Adrenal gland (tissue), 19 donors: ENCODE measurements at regions of chr1 and their contacts with region 1.

Region 1: GRCh38 chr1:23539698-23540266 is 8.7 kb upstream of the E2F2 start:
- DNase-seq: peak; percentile 87 to 97 (median 92)
- H3K4me3 ChIP-seq: peak overlapping the region in 1 of 4 donors; percentile 26
- H3K27ac ChIP-seq: no peak overlapping the region
- H3K4me1 ChIP-seq: peaks cover 6 to 17% of the 10 kb centered on the region in 2 donors
- H3K27me3 ChIP-seq: no peaks in the 10 kb centered on the region
- CTCF ChIP-seq: peak; percentile 84 to 93 (median 90)
- POLR2A ChIP-seq: no peak

Region 2: DNA sequence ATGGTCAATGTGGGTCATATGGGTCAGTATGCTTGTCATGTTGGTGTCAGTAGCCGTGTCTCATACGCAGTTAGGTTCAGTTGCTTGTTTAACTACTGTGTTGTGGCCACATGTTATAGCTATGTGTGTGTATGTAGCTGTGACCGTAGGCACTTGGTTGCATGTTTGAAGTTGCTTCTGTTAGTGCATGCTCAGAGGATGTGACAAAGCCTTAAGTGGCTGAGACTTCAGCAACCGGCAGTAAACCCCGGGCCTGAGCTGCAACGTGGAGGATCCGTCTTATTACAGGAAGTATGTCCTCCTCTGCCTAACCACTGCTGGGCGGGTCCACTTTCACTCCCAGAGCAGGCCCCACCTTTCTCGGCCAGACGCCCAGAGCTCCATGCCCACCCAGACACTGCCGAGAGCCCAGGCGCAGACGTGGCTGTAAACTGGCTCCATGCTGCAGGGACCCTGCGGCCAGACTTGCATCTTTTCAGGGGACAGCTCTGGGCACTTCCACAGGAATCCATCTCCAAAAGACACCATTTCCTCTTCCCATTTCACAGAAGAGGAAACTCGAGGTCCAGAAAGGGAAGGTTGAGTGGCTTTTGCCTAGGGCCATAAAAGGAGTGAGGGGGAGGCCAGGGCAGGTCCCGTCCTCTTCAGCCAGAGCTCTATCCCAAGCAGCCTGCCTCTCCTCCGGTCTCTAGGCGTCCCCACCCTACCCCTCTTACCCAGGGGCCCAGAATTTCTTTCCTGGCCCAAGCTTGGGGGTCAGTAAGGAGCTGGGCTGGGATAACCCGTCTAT is 117.3 kb before region 1 on chr1:
- intact Hi-C with region 1: loop called in 1 of 2 experiments (anchors 10 kb)
- DNase-seq: peak; percentile 60 to 86 (median 77)
- H3K4me3 ChIP-seq: peak overlapping the region in 1 of 4 donors; percentile 82
- H3K27ac ChIP-seq: peak overlapping the region in 4 of 5 donors; percentile 11 to 89 (median 86)
- H3K4me1 ChIP-seq: peaks cover 34 to 48% of the 10 kb centered on the region in 2 donors
- H3K27me3 ChIP-seq: no peaks in the 10 kb centered on the region
- CTCF ChIP-seq: no peak
- POLR2A ChIP-seq: peak in 1 of 2 donors; percentile 24

Region 3: GRCh38 chr1:23496490-23497181 is 43.1 kb before region 1 on chr1:
- intact Hi-C with region 1: loop called (anchors 2 to 5 kb)
- DNase-seq: no peak
- H3K4me3 ChIP-seq: no peak overlapping the region
- H3K27ac ChIP-seq: no peak overlapping the region
- H3K4me1 ChIP-seq: no peaks in the 10 kb centered on the region
- H3K27me3 ChIP-seq: no peaks in the 10 kb centered on the region
- CTCF ChIP-seq: no peak
- POLR2A ChIP-seq: no peak

Region 4: GRCh38 chr1:23634842-23635651 is 95.3 kb after region 1 on chr1:
- intact Hi-C with region 1: loop called (anchors 1 to 5 kb)
- DNase-seq: peak; percentile 49 to 84 (median 64)
- H3K4me3 ChIP-seq: peak overlapping the region in 2 of 4 donors; percentile 21 to 61
- H3K27ac ChIP-seq: peak overlapping the region in 3 of 5 donors; percentile 69 to 93 (median 74)
- H3K4me1 ChIP-seq: peaks cover 0 to 19% of the 10 kb centered on the region in 2 donors
- H3K27me3 ChIP-seq: no peaks in the 10 kb centered on the region
- CTCF ChIP-seq: peak; percentile 85 to 93 (median 88)
- POLR2A ChIP-seq: no peak

Region 5: DNA sequence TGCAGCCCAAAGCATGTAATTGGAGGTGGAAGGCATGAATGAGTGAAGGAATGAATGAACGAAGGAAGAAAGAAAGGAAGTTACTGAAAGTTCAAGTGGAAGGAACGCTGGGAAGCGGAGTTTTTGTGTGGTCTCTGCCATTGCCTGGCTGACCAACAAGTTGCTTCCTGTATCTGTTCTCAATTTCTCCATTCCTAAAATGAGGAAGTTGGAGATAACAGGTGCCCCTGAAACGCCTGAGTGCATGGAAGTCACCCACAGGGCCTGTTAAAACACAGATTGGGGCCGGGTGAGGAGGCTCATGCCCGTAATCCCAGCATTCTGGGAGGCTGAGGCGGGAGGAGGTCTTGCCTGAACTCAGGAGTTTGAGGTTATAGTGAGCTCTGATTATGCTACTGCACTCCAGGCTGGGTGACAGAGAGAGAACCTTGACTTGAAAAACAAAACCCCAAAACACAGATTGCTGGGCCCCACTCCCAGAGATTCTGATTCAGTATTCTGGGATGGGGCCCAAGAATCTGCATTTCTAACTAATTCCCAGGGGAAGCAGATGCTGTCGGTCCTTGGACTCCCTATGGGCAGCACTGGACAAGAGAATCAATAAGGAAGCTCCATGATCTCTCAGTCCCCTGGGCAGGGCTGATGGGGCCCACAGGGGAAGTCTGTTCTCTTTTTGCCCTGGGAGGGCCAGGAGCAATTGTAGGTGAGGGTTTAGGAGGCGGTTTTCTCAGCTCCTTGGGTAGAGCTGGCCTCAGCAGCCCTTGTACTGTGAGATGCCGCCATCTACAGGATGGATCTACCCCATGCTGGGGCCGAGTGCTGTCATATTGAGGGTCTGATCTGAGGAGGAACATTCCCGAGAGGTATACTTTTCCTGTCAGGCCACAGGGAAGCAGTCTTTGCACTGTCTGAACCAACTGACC is 376.7 kb after region 1 on chr1:
- intact Hi-C with region 1: no loop called
- DNase-seq: peak; percentile 51 to 79 (median 69)
- H3K4me3 ChIP-seq: no peak overlapping the region
- H3K27ac ChIP-seq: no peak overlapping the region
- H3K4me1 ChIP-seq: peaks cover 0 to 7% of the 10 kb centered on the region in 2 donors
- H3K27me3 ChIP-seq: no peaks in the 10 kb centered on the region
- CTCF ChIP-seq: peak; percentile 33 to 66 (median 58)
- POLR2A ChIP-seq: no peak